ENCODE measurements at regions of chr9 and their contacts with region 1.

Region 1: GRCh38 chr9:91963711-91964240 is 13.7 kb upstream of the ROR2 start:
- DNase-seq: no peak
- H3K4me3 ChIP-seq: no peak overlapping the region
- H3K27ac ChIP-seq: no peak overlapping the region
- H3K4me1 ChIP-seq: no peaks in the 10 kb centered on the region
- H3K27me3 ChIP-seq: no peaks in the 10 kb centered on the region
- CTCF ChIP-seq: no peak
- POLR2A ChIP-seq: no peak

Region 2: GRCh38 chr9:91905995-91906469 is 57.7 kb before region 1 on chr9:
- CTCF ChIA-PET with region 1: no interaction called
- POLR2A ChIA-PET with region 1: no interaction called
- dilution Hi-C with region 1: no loop called
- intact Hi-C with region 1: no loop called
- DNase-seq: no peak
- H3K4me3 ChIP-seq: no peak overlapping the region
- H3K27ac ChIP-seq: no peak overlapping the region
- H3K4me1 ChIP-seq: no peaks in the 10 kb centered on the region
- H3K27me3 ChIP-seq: no peaks in the 10 kb centered on the region
- CTCF ChIP-seq: no peak
- POLR2A ChIP-seq: no peak

Region 3: GRCh38 chr9:91949946-91950664 is 13.7 kb before region 1 on chr9 and contains the start of gene ROR2:
- CTCF ChIA-PET with region 1: interaction called, 18 read pairs
- POLR2A ChIA-PET with region 1: no interaction called
- dilution Hi-C with region 1: no loop called
- intact Hi-C with region 1: no loop called
- DNase-seq: peak; percentile 7
- H3K4me3 ChIP-seq: peak within 1 kb of the TSS in 2 of 3 experiments; percentile 4 to 9
- H3K27ac ChIP-seq: no peak within 1 kb of the TSS
- H3K4me1 ChIP-seq: no peaks in the 10 kb centered on the region
- H3K27me3 ChIP-seq: peaks cover 35 to 67% of the 10 kb centered on the region in 2 experiments
- CTCF ChIP-seq: peak; percentile 52 to 57
- POLR2A ChIP-seq: no peak
- total RNA-seq, gene ROR2: not detected in 2 replicates

Measured in endothelial cell of umbilical vein (primary cell).